ENCODE measurements at regions of chr17 and their contacts with region 1.

Region 1: GRCh38 chr17:2862197-2862596 is 66.0 kb downstream of the RAP1GAP2 start:
- DNase-seq: no peak
- ATAC-seq: no peak
- H3K4me3 ChIP-seq: no peak overlapping the region
- H3K27ac ChIP-seq: peak overlapping the region in 3 of 10 donors; percentile 41 to 62 (median 52)
- H3K4me1 ChIP-seq: peaks cover 0 to 38% (median 2%) of the 10 kb centered on the region in 9 donors
- H3K27me3 ChIP-seq: no peaks in the 10 kb centered on the region
- CTCF ChIP-seq: no peak

Region 2: GRCh38 chr17:2904152-2904551 is 42.0 kb after region 1 on chr17:
- intact Hi-C with region 1: loop called in 4 of 10 experiments (anchors 5 kb)
- DNase-seq: peak; percentile 70 to 75
- ATAC-seq: peak; percentile 69 to 86 (median 80)
- H3K4me3 ChIP-seq: no peak overlapping the region
- H3K27ac ChIP-seq: peak overlapping the region in 4 of 10 donors; percentile 28 to 67 (median 36)
- H3K4me1 ChIP-seq: peaks cover 0 to 61% (median 26%) of the 10 kb centered on the region in 9 donors
- H3K27me3 ChIP-seq: no peaks in the 10 kb centered on the region
- CTCF ChIP-seq: no peak

Measured in heart right ventricle (tissue), 16 donors.